GM10248 (cell line): ENCODE measurements at regions of chr16 and their contacts with region 1.

Region 1: DNA sequence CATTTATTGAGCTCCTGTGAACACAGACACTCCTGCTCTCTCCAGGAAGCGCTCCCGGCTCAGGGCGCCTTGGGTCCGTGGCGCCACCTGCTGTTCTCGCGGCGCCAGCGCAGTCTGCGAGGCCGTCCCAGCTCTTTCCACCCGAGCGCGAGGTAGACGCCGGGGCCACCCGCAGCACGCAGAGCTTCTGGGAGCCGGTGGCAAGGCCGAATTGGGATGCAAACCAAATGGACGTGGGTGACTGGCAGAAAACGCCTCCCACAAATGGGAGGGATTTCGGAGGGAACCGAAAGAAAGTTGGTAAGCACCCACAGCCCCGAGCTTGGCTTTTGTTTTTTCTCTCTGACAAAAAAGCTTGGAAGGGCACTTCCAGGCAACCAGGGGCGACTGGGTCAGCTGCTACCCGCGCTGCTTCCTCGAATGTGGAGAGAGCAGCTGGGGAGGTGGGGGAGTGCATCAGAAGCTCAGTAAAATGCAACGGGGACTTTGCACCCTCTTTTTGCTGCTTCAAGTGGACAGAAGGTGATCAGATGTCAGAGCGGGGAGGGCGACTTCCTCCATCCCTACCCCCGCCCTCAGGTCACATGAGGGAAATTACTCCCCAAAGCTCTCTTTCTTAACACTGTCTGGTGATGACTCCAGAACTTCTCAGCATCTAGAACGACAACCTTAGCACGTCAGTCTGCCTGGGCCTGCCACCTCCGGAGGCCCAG is 13.5 kb upstream of the N4BP1 start:
- DNase-seq: peak; percentile 91
- CTCF ChIP-seq: peak; percentile 98

Region 2: GRCh38 chr16:48318630-48319029 is 304.8 kb before region 1 on chr16:
- CTCF ChIA-PET with region 1: interaction called, 13 read pairs
- POLR2A ChIA-PET with region 1: no interaction called
- DNase-seq: no peak
- CTCF ChIP-seq: no peak

Region 3: DNA sequence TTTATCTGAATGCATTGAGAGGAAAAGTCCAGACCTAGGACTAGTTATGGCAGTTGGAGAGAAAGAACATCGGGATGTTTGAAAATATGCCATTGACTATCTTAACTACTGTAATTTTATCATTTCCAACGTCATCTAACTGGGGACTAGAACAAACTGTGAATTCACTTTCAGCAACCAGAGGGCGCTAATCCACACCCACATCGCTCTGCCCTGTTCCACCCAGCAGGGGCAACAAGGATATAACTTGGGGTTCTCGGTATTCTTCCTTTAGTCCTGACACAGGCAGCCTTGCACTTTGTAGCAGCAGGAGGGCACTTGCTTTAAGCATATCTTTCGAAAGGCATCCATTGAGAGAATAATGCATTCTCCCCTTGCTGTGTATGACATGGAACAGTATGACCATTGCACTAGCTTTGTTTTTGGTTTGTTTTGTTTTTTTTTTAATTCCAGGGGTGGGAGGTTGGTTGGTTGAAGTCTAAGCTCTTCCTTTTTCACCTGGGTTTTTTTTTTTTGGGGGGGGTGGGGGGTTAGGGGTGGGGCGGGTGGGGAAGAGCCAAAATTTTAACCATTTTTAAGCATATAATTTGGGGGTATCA is 269.8 kb before region 1 on chr16:
- CTCF ChIA-PET with region 1: interaction called, 95 read pairs
- POLR2A ChIA-PET with region 1: no interaction called
- DNase-seq: peak; percentile 78
- CTCF ChIP-seq: peak; percentile 68

Region 4: DNA sequence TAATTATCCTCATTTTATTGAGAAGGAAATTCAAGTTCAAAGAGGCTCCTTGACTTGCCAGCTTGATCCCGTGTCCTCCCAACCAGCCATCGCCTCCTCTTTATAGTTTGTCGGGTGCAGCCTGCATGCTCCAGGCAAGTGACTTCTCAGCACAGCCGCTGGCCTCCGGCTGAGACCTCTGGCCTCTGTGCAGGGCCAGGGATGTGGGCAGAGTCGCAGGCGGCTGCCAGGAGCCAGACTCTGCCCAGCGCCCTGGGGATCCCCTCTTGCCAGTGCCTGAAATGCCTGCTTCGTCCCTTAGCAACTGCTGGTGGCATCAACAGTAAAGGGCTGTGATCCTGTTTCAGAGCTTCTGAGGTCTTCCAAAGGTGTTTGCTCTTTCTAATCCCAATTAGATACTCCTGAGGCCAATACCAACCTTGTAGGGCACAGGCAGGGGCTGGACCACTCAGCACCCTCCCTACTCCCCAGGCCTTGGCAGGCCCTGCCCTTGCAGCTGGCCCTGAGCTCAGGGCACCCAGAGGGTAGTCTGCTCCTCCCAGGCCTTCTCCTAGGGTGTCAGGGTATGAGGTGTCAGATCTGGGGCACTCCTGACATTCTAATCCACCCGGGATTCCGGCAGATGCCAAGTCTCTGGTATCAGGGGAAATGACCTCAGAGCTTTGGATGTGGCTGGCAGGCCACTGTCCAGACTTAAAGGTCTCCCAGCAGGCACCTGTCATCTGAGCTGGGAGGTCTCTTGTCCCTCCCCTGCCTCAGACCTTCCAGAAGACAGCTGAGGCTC is 170.3 kb before region 1 on chr16:
- CTCF ChIA-PET with region 1: interaction called, 11 read pairs
- POLR2A ChIA-PET with region 1: no interaction called
- DNase-seq: no peak
- CTCF ChIP-seq: no peak

Region 5: GRCh38 chr16:48534601-48535340 is 88.7 kb before region 1 on chr16:
- CTCF ChIA-PET with region 1: interaction called, 13 read pairs
- POLR2A ChIA-PET with region 1: no interaction called
- DNase-seq: no peak
- CTCF ChIP-seq: no peak

Region 6: GRCh38 chr16:48558371-48558841 is 65.1 kb before region 1 on chr16:
- CTCF ChIA-PET with region 1: interaction called, 11 read pairs
- POLR2A ChIA-PET with region 1: no interaction called
- DNase-seq: no peak
- CTCF ChIP-seq: no peak

Region 7: DNA sequence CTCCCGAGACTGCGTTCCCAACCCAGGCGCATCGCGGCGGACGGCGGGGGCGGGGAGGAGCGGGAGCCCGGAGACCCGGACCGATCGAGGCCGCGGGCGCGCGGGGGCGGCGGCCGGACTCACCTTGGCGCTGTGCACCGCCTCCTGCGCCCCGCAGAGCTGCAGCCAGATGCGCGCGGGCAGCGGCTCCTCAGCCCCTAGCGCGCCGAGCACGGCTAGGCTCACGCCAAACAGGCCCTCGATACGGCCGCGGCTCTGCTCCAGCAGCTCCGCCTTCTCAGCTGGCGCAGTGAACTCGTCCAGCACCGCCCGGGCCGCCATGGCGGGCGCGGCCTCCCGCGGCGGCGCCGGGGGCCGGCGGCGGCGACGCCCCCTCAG is 13.8 kb before region 1 on chr16:
- CTCF ChIA-PET with region 1: interaction called, 66 read pairs
- POLR2A ChIA-PET with region 1: no interaction called
- DNase-seq: no peak
- CTCF ChIP-seq: no peak